Activated CD4-positive, alpha-beta T cell treated with anti-CD3 and anti-CD28 coated beads for 36 hours (primary cell): ENCODE measurements at regions of chr11 and their contacts with region 1.

Region 1: GRCh38 chr11:11841723-11842420 is at the start of gene USP47:
- DNase-seq: peak; percentile 97
- ATAC-seq: peak; percentile 54
- H3K4me3 Mint-ChIP-seq: no peak within 1 kb of the TSS
- H3K27ac Mint-ChIP-seq: no peak within 1 kb of the TSS
- H3K4me1 Mint-ChIP-seq: peaks cover 28% of the 10 kb centered on the region
- H3K27me3 Mint-ChIP-seq: peaks cover 8% of the 10 kb centered on the region
- total RNA-seq, gene USP47: 43.3 to 56.3 TPM

Region 2: GRCh38 chr11:10750838-10751580 is 1090.9 kb before region 1 on chr11 and contains the start of gene CTR9:
- CTCF ChIA-PET with region 1: no interaction called
- POLR2A ChIA-PET with region 1: no interaction called
- intact Hi-C with region 1: loop called in 1 of 2 experiments (anchors 5 kb)
- DNase-seq: peak; percentile 97
- ATAC-seq: peak; percentile 92
- H3K4me3 Mint-ChIP-seq: peak within 1 kb of the TSS; percentile 96
- H3K27ac Mint-ChIP-seq: peak within 1 kb of the TSS; percentile 92
- H3K4me1 Mint-ChIP-seq: peaks cover 16% of the 10 kb centered on the region
- H3K27me3 Mint-ChIP-seq: no peaks in the 10 kb centered on the region
- total RNA-seq, gene CTR9: 39.7 to 43.9 TPM

Region 3: GRCh38 chr11:11621573-11622319 is 220.1 kb before region 1 on chr11 and contains the start of gene GALNT18:
- CTCF ChIA-PET with region 1: no interaction called
- POLR2A ChIA-PET with region 1: no interaction called
- intact Hi-C with region 1: loop called in 1 of 2 experiments (anchors 5 kb)
- DNase-seq: peak; percentile 94
- ATAC-seq: peak; percentile 99
- H3K4me3 Mint-ChIP-seq: peak within 1 kb of the TSS; percentile 80
- H3K27ac Mint-ChIP-seq: peak within 1 kb of the TSS; percentile 63
- H3K4me1 Mint-ChIP-seq: peaks cover 5% of the 10 kb centered on the region
- H3K27me3 Mint-ChIP-seq: peaks cover 37% of the 10 kb centered on the region
- total RNA-seq, gene GALNT18: 6.9 to 8.8 TPM

Region 4: DNA sequence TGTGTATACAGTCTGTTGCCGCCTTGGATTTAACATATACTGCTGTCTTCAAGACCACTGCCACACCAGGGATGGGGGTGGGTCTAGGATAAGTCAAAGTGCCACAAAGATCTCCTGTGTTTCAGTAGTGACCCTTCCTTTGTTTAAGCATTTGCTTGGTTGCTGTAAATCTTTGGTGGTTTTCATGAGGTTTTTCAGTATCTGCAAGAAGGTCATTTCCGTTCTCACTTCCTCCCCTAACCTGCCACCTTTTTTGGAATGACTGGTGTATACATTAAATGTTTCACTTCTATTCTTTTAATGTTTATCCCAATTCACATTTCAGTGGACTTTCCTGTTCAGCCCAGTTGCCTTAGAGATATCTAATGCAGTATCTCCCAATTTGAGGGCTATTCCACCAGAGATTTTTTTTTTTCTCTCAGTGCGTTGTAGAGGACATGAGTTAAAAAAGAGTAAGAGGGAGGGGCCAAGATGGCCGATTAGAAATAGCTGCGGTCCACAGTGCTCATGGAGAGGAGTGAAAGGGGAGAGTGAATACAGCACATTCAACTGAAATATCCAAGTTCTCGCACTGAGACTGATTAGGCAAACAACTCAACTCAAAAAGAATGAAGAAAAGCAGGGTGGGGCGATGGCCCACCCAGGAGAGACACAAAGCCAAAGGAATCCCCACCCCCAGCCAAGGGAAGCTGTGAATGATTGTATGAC is 43.1 kb after region 1 on chr11:
- CTCF ChIA-PET with region 1: interaction called, 4 read pairs
- POLR2A ChIA-PET with region 1: no interaction called
- intact Hi-C with region 1: loop called in 1 of 2 experiments (anchors 5 kb)
- DNase-seq: no peak
- ATAC-seq: peak; percentile 53
- H3K4me3 Mint-ChIP-seq: no peak overlapping the region
- H3K27ac Mint-ChIP-seq: peak overlapping the region; percentile 49
- H3K4me1 Mint-ChIP-seq: peaks cover 49% of the 10 kb centered on the region
- H3K27me3 Mint-ChIP-seq: no peaks in the 10 kb centered on the region

Region 5: GRCh38 chr11:11937957-11938356 is 96.1 kb after region 1 on chr11:
- CTCF ChIA-PET with region 1: no interaction called
- POLR2A ChIA-PET with region 1: no interaction called
- intact Hi-C with region 1: no loop called
- DNase-seq: no peak
- ATAC-seq: no peak
- H3K4me3 Mint-ChIP-seq: no peak overlapping the region
- H3K27ac Mint-ChIP-seq: no peak overlapping the region
- H3K4me1 Mint-ChIP-seq: no peaks in the 10 kb centered on the region
- H3K27me3 Mint-ChIP-seq: no peaks in the 10 kb centered on the region

Region 6: DNA sequence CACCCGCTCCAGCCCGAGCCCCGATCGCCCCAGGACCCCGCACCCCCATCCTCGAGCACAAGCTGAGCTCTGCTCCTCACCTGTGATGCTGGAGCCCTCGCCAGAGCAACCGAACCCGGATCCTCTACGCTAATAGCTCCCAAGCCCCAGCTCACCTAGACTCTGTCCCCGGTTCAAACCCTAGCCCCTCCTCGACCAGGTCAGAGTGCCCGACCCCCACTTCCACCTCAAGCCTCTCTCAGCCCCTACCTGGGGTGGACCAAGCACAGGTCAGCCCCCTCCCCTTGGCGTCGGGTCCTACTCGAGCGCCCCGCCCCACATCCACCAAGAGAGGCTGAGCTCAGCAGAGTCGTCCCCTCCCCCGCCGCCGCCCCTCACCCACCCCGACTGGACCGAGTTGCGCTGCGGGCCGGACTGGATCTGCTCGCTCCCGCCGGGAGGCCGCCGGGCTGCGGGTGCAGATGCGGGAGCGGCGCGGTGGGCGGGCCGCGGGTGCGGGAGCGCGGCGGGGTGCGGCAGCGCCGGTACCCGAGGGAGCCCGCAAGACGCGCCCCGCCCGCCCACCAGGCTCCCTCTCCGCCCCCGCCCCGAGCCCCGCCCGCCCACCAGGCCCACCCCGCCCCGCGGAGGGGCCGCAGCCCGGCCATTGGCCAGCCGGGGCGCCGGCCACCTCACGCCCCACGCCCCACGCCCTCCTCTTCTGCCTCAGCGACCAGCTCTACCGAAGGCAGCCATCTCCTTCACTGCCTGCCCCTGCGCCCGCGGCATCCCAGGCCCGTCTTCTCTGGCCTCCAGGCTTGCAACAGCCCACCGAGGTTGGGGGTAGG is 167.1 kb after region 1 on chr11:
- CTCF ChIA-PET with region 1: no interaction called
- POLR2A ChIA-PET with region 1: no interaction called
- intact Hi-C with region 1: no loop called
- DNase-seq: peak; percentile 11
- ATAC-seq: peak; percentile 19
- H3K4me3 Mint-ChIP-seq: peak overlapping the region; percentile 55
- H3K27ac Mint-ChIP-seq: no peak overlapping the region
- H3K4me1 Mint-ChIP-seq: peaks cover 11% of the 10 kb centered on the region
- H3K27me3 Mint-ChIP-seq: peaks cover 66% of the 10 kb centered on the region

Region 7: DNA sequence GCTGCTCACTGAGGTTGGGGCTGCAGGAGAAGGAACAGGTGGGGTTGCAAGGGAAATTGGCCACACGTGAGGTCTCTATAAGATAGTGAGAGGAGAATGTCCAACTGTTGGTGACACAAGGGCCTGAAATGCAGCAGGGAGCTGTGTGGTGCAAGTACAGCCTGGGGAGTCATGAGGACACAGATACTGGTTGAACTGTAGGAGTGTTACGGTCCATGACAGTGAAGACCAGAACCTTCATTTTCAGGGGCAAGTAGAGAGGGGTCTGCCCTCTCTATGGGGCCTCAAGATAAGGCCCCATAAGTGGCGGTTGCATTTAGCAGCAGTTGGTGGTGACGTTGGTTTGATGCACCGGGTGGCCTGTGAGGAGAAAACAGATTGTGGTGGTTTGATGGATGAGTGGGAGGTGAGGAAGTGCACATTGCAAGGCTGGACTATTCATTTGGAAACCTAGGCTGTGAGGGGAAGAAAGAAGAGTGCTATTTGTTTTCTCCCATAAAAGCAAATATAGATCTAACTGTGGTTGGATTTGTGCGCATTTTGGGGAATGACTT is 307.9 kb after region 1 on chr11:
- CTCF ChIA-PET with region 1: interaction called, 3 read pairs
- POLR2A ChIA-PET with region 1: interaction called, 11 read pairs
- intact Hi-C with region 1: loop called in 1 of 2 experiments (anchors 2 kb)
- DNase-seq: peak; percentile 81
- ATAC-seq: peak; percentile 52
- H3K4me3 Mint-ChIP-seq: peak overlapping the region; percentile 54
- H3K27ac Mint-ChIP-seq: peak overlapping the region; percentile 95
- H3K4me1 Mint-ChIP-seq: peaks cover 63% of the 10 kb centered on the region
- H3K27me3 Mint-ChIP-seq: no peaks in the 10 kb centered on the region

Region 8: GRCh38 chr11:12274558-12275197 is 432.8 kb after region 1 on chr11:
- CTCF ChIA-PET with region 1: no interaction called
- POLR2A ChIA-PET with region 1: no interaction called
- intact Hi-C with region 1: no loop called
- DNase-seq: peak; percentile 6
- ATAC-seq: no peak
- H3K4me3 Mint-ChIP-seq: no peak overlapping the region
- H3K27ac Mint-ChIP-seq: no peak overlapping the region
- H3K4me1 Mint-ChIP-seq: no peaks in the 10 kb centered on the region
- H3K27me3 Mint-ChIP-seq: no peaks in the 10 kb centered on the region

Region 9: GRCh38 chr11:12673924-12674570 is 832.2 kb after region 1 on chr11 and contains the start of gene TEAD1:
- CTCF ChIA-PET with region 1: no interaction called
- POLR2A ChIA-PET with region 1: no interaction called
- intact Hi-C with region 1: loop called in 1 of 2 experiments (anchors 5 kb)
- DNase-seq: peak; percentile 94
- ATAC-seq: peak; percentile 91
- H3K4me3 Mint-ChIP-seq: peak within 1 kb of the TSS; percentile 70
- H3K27ac Mint-ChIP-seq: no peak within 1 kb of the TSS
- H3K4me1 Mint-ChIP-seq: peaks cover 7% of the 10 kb centered on the region
- H3K27me3 Mint-ChIP-seq: peaks cover 63% of the 10 kb centered on the region
- total RNA-seq, gene TEAD1: 0.59 to 0.65 TPM